ENCODE measurements at regions of chr12 and their contacts with region 1.

Region 1: GRCh38 chr12:25126071-25126470 is 68.9 kb downstream of the DNAI7 start:
- DNase-seq: no peak
- CTCF ChIP-seq: no peak

Region 2: GRCh38 chr12:24989216-24989615 is 136.9 kb before region 1 on chr12:
- in situ Hi-C with region 1: loop called (anchors 5 kb)
- DNase-seq: no peak
- CTCF ChIP-seq: no peak